ENCODE measurements at regions of chr7 and their contacts with region 1.

Region 1: DNA sequence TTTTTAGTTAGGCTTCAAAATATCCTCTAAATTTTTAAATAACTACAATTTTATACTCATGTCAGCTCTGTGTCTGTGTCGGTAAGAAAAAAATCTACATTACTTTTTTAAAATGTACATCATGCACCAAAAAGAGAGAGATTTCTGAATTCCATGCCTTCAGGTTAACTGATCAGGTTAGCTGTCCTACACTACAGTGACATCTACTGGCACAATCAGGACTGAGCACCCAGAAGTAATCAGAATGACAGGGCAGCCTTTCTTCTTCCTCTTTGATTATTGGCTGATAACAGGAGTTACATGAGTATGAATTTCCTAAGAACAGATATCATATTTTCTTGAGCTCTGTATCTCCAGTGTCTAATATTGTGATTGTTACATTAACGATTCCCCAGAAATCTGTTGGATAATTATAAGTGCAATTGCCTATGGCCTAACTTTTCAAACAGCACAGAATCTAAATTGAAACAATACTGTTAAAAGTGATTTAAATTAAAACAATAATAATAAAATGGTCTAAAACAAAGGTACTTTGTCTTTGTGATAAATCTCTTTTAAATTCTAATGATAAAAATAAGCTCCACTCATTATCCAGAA is 41.8 kb upstream of the HYCC1 start:
- DNase-seq: peak; percentile 76
- H3K4me3 ChIP-seq: no peak overlapping the region
- H3K27ac ChIP-seq: no peak overlapping the region
- H3K4me1 ChIP-seq: no peaks in the 10 kb centered on the region
- H3K27me3 ChIP-seq: no peaks in the 10 kb centered on the region
- CTCF ChIP-seq: peak; percentile 73 to 76
- POLR2A ChIP-seq: no peak

Region 2: DNA sequence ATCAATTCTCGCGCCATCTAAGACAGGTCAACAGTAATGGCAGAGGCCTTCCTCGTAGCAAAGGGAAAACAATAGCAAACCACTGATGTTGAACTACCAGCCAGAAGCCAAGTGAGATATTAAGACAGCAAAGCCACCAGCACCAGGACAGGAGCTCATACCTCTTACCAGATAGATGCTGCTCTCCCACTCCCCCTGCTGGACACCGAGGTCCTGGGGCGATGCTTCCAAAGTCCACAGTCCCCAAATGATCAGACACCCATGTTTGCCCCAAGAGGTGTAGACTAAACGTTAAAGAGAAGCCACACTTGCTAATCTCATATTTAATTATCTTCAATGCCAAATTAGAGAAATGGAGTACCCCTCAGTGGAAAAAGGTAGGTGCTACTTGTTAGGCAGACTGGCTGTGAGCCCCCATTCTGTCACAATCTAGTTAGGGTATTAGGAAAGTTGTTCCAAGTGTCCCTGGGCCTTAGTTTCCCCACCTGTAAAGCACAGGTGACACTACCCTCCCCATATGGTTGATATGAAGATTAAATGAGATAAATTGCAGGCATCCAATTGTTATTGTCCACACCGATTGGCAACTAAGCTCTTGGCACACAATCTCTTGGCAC is 273.0 kb before region 1 on chr7:
- CTCF ChIA-PET with region 1: interaction called, 32 read pairs
- POLR2A ChIA-PET with region 1: no interaction called
- dilution Hi-C with region 1: no loop called
- intact Hi-C with region 1: loop called (anchors 2 kb)
- DNase-seq: peak; percentile 65
- H3K4me3 ChIP-seq: no peak overlapping the region
- H3K27ac ChIP-seq: no peak overlapping the region
- H3K4me1 ChIP-seq: no peaks in the 10 kb centered on the region
- H3K27me3 ChIP-seq: no peaks in the 10 kb centered on the region
- CTCF ChIP-seq: peak; percentile 94 to 95
- POLR2A ChIP-seq: no peak

Region 3: DNA sequence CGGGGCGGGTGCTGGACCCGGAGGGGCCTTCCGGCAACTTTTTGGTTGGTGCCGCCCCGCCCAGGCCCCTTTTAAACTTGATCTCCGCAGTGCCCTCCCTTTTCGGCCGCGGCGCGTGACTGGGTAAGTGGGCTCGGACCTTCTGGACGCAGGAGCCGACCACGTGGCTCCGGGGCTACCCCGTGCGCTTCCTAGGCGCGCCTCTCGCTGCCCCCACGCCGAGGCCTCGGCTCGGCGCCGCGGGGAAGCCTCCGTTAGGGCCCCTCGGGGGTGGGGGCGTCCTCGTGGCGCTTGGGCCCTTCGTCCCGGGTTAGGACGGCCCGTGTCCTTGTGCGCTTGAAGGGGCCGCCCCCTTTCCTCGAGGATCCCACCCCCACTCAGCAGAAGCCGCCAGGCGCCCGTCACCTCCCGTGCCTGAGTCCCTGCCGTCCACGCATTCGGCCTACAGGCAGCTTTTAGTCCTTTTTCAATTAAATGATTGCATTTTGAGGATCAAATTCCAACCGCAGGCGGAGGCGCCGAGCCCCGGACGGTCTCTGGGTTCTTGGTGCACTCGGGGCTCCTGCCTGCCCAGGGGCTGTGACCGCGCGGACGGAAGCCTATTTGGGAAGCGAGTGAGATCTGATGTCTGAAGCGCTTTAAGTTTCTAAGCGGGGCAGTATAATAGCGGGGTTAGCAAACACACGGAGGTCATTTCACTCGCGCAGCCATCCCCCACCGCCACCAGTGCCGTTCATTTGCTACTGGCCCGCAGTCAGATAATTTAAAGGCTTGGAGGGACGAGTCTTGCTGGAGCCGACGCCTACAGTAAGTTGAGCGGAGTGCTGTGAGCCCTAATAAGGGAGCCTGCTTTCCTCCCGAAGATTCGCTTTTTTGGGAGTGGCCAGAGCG is 201.3 kb before region 1 on chr7:
- CTCF ChIA-PET with region 1: interaction called, 14 read pairs
- POLR2A ChIA-PET with region 1: no interaction called
- dilution Hi-C with region 1: no loop called
- intact Hi-C with region 1: loop called (anchors 1 kb)
- DNase-seq: peak; percentile 72
- H3K4me3 ChIP-seq: peak overlapping the region; percentile 76 to 88 (median 86)
- H3K27ac ChIP-seq: peak overlapping the region; percentile 74
- H3K4me1 ChIP-seq: peaks cover 36% of the 10 kb centered on the region
- H3K27me3 ChIP-seq: no peaks in the 10 kb centered on the region
- CTCF ChIP-seq: peak; percentile 41 to 58
- POLR2A ChIP-seq: peak; percentile 84

Region 4: GRCh38 chr7:22934473-22935065 is 121.1 kb before region 1 on chr7:
- CTCF ChIA-PET with region 1: interaction called, 3 read pairs
- POLR2A ChIA-PET with region 1: no interaction called
- dilution Hi-C with region 1: no loop called
- intact Hi-C with region 1: loop called (anchors 5 kb)
- DNase-seq: no peak
- H3K4me3 ChIP-seq: no peak overlapping the region
- H3K27ac ChIP-seq: no peak overlapping the region
- H3K4me1 ChIP-seq: no peaks in the 10 kb centered on the region
- H3K27me3 ChIP-seq: no peaks in the 10 kb centered on the region
- CTCF ChIP-seq: no peak
- POLR2A ChIP-seq: no peak

Region 5: GRCh38 chr7:23043441-23043840 is 12.2 kb before region 1 on chr7:
- CTCF ChIA-PET with region 1: interaction called, 14 read pairs
- POLR2A ChIA-PET with region 1: no interaction called
- dilution Hi-C with region 1: no loop called
- intact Hi-C with region 1: no loop called
- DNase-seq: no peak
- H3K4me3 ChIP-seq: no peak overlapping the region
- H3K27ac ChIP-seq: no peak overlapping the region
- H3K4me1 ChIP-seq: no peaks in the 10 kb centered on the region
- H3K27me3 ChIP-seq: no peaks in the 10 kb centered on the region
- CTCF ChIP-seq: no peak
- POLR2A ChIP-seq: no peak